Head of caudate nucleus (tissue), 42 donors: ENCODE measurements at regions of chr19 and their contacts with region 1.

Region 1: GRCh38 chr19:44653977-44654774 is 10.5 kb downstream of the PVR start:
- DNase-seq: peak; percentile 13 to 76 (median 49)

Region 2: DNA sequence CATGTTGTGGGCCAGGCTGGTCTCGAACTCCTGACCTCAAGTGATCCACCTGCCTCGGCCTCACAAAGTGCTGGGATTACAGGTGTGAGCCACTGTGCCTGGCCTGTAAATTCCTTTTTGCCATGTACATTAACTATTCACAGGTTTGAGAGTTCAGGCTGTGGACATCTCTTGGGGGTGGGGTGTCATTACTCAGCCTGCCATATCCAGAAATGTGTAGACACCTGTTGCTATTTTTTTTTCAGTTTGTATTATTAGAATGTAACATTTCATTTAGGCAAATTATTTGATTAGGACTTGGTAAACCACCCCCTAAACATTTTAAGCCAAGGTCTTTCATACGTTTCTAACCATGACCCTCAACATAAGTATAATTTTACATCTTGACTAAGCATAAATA is 421.3 kb before region 1 on chr19:
- intact Hi-C with region 1: no loop called
- DNase-seq: no peak

Region 3: DNA sequence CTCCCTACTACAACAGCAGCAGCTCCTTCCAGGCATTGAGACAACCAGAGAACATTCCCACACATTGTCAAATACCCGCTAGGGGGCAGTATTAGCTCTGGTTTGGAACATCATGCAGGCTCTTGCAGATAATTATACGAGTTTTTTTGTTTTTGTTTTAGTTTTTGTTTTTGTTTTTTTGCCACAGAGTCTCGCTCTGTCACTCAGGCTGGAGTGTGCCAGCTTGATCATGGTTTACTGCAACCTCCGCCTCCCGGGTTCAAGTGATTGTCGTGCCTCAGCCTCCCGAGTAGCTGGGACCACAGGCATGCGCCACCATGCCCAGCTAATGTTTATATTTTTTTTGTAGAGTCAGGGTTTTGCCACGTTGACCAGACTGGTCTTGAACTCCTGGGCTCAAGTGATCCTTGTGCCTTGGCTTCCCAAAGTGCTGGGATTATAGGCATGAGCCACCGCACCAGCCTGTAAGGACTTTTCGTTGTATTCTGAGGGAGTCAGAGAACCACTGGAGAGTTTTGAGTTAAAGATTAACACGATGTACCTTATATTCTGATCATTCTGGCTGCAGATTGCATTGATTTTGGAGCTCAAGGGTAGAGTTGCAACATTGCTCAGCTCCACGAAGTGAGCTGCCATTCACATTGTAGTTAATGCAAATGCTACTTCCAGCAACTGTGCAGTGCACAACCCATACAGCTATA is 83.0 kb before region 1 on chr19:
- intact Hi-C with region 1: loop called (anchors 10 kb)
- DNase-seq: peak in 37 of 42 donors; percentile 8 to 86 (median 69)

Region 4: GRCh38 chr19:44734986-44735385 is 80.8 kb after region 1 on chr19:
- intact Hi-C with region 1: no loop called
- DNase-seq: no peak